ENCODE measurements at regions of chr6 and their contacts with region 1.

Region 1: DNA sequence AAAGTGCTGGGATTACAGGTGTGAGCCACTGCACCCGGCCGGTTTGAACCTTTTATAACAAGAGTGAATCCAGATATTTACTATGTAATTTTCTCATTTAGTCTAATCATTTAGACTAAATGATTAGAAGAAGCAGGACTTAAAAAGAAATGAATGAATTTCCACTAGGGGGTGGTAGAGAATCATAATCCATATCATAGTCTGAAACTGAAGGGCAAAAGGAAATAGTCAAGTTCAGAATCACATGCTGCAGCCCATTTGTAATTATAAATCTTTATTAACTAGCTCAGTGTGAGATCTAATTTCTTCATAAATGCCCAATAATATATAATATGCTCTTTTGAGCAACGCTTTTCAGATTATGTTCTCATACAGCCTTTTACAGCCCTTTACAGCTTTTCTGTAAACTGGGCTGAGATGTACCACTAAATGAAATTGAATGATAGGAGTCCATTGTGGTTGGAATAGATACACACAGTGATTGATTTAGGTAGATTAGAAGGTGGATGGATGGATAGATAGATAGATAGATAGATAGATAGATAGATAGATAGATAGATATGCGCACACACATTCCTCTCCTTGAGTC is 31.8 kb downstream of the PSMB9 start:
- DNase-seq: peak; percentile 87
- ATAC-seq: peak; percentile 60
- H3K4me3 ChIP-seq: no peak overlapping the region
- H3K27ac ChIP-seq: no peak overlapping the region
- H3K4me1 ChIP-seq: 0 out of 2 replicates have a peak, but pooled peaks cover 4% of the 10 kb centered on the region
- H3K27me3 ChIP-seq: no peaks in the 10 kb centered on the region
- CTCF ChIP-seq: peak; percentile 73

Region 2: DNA sequence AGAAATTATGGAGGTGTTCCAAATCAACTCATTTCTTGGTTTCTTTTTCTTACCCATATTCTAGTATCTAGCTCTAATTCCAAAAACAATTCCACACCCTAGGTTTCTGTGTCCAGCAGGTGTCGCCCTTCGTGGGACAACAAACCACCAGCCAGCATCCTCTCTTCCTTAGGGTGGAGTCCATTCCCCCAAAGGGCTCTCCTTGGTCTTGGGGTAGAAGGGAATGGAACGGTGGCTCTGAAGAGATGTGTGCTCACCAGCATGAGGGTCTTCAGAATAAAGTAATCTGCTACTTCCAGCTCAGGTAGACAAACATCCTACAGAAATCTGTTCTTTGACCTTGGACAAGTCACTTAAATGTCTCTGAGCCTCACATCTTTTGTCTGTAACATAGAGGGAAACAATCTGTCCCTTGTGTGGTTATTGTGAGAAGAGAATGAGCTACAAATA is 47.9 kb after region 1 on chr6:
- CTCF ChIA-PET with region 1: interaction called, 4 read pairs
- POLR2A ChIA-PET with region 1: no interaction called
- intact Hi-C with region 1: loop called (anchors 5 kb)
- DNase-seq: peak; percentile 80
- ATAC-seq: peak; percentile 71
- H3K4me3 ChIP-seq: no peak overlapping the region
- H3K27ac ChIP-seq: no peak overlapping the region
- H3K4me1 ChIP-seq: no peaks in the 10 kb centered on the region
- H3K27me3 ChIP-seq: peaks cover 44% of the 10 kb centered on the region
- CTCF ChIP-seq: peak; percentile 92

Region 3: GRCh38 chr6:32947552-32948465 is 62.0 kb after region 1 on chr6:
- CTCF ChIA-PET with region 1: interaction called, 5 read pairs
- POLR2A ChIA-PET with region 1: no interaction called
- intact Hi-C with region 1: loop called (anchors 1 kb)
- DNase-seq: peak; percentile 75
- ATAC-seq: peak; percentile 90
- H3K4me3 ChIP-seq: no peak overlapping the region
- H3K27ac ChIP-seq: no peak overlapping the region
- H3K4me1 ChIP-seq: no peaks in the 10 kb centered on the region; the same call in 1 of the 2 replicates
- H3K27me3 ChIP-seq: no peaks in the 10 kb centered on the region
- CTCF ChIP-seq: peak; percentile 82

Region 4: DNA sequence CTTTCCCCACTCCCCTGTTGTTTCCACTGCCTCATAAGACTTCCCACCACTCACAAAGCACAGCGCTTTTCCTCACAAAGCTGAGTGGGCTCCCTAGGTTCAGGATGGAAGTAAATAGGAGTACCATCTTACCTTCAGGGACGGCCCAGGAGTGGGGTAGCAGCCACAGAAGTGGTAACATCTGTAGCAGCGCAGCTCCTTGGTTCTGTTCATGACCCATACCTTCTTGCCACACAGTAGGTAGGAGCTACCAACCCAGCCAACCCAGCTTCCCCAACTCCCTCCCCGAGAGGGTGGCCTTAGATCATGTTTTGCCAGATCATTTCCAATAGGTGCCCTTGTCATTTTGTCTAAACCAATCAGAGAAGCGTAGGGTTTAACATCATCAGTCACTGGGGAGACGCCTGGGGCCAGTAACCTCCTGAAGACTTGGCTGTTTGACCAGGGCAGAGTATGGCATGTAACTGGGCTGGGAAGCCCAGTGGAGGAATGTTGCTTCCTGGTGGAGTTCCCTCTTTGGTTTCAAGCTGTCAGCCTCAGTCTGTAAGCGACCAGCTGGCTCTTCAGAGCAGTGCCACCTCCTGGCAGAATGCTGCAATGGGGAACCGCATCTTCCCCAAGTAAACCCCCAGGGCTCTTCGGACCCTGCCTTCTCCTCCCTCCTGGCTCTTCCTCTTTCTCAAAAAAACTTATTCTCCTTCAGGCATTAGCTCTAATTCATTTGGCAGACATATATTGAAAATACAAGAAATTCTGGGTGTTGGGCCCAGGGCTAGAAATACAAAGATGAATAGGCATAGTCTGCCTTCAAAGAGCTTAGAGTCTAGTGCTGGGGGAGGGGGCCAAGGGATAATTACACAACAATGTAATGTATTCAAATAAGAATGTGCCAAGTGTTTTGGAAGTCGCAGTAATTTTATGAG is 67.3 kb after region 1 on chr6 and contains the start of gene HLA-DMA:
- CTCF ChIA-PET with region 1: interaction called, 5 read pairs
- POLR2A ChIA-PET with region 1: no interaction called
- intact Hi-C with region 1: loop called (anchors 1 kb)
- DNase-seq: peak; percentile 96
- ATAC-seq: peak; percentile 97
- H3K4me3 ChIP-seq: no peak within 1 kb of the TSS
- H3K27ac ChIP-seq: no peak within 1 kb of the TSS
- H3K4me1 ChIP-seq: no peaks in the 10 kb centered on the region; the same call in 1 of the 2 replicates
- H3K27me3 ChIP-seq: no peaks in the 10 kb centered on the region
- CTCF ChIP-seq: peak; percentile 79
- total RNA-seq, gene HLA-DMA: 1.7 and 3.0 TPM in 2 replicates

Region 5: GRCh38 chr6:32984605-32985389 is 99.0 kb after region 1 on chr6:
- CTCF ChIA-PET with region 1: interaction called, 22 read pairs
- POLR2A ChIA-PET with region 1: no interaction called
- intact Hi-C with region 1: loop called (anchors 1 kb)
- DNase-seq: peak; percentile 95
- ATAC-seq: peak; percentile 95
- H3K4me3 ChIP-seq: no peak overlapping the region
- H3K27ac ChIP-seq: no peak overlapping the region
- H3K4me1 ChIP-seq: peaks cover 8% of the 10 kb centered on the region; the same call in 1 of the 2 replicates
- H3K27me3 ChIP-seq: no peaks in the 10 kb centered on the region
- CTCF ChIP-seq: peak; percentile 94

Region 6: GRCh38 chr6:33040157-33040556 is 154.4 kb after region 1 on chr6:
- CTCF ChIA-PET with region 1: no interaction called
- POLR2A ChIA-PET with region 1: no interaction called
- intact Hi-C with region 1: no loop called
- DNase-seq: no peak
- ATAC-seq: no peak
- H3K4me3 ChIP-seq: no peak overlapping the region
- H3K27ac ChIP-seq: no peak overlapping the region
- H3K4me1 ChIP-seq: no peaks in the 10 kb centered on the region
- H3K27me3 ChIP-seq: peaks cover 36% of the 10 kb centered on the region
- CTCF ChIP-seq: no peak

Region 7: DNA sequence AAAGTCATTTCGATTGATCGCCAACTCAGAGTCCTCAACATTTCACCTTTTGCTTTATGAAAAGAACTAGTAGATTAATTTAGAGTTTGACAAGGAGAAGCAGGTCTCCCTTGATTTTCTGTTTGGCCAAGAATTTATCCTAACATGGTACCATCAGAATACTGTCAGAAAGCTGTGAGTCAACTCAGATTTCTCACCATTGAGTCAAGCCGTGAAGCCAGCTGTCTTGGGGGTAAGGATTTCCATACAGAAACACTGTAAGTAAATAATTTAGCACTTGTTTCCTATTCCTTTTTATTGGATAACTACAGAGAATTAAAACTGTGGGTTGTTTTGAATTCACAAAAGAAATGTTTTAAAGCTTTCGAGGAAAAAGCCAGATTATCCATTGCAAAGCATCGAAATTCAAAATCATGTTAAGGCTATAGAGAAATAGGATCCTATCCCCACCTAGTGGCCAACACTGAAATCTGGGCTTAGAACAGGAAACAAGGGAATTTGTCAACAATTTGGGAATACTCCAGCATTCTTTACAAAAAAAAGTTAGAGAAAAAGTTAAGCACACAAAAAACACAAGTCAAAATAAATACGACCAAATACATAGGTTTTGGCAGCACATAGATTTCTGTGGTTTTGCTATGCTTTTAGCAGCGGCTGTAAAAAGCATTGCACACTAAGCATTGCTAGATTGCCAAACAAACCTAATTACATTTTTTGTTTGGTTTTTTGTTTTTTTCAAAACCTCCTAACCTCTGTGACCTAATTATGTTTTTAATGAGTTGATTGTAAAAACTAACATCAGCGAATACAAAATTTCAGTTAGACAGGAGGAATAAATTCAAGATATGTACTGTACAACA is 262.2 kb after region 1 on chr6:
- CTCF ChIA-PET with region 1: no interaction called
- POLR2A ChIA-PET with region 1: no interaction called
- intact Hi-C with region 1: loop called (anchors 10 kb)
- DNase-seq: peak; percentile 63
- ATAC-seq: no peak; the same call in 1 of the 2 replicates
- H3K4me3 ChIP-seq: no peak overlapping the region
- H3K27ac ChIP-seq: no peak overlapping the region
- H3K4me1 ChIP-seq: no peaks in the 10 kb centered on the region
- H3K27me3 ChIP-seq: peaks cover 21% of the 10 kb centered on the region
- CTCF ChIP-seq: peak; percentile 81